GM18951 (cell line): ENCODE measurements at regions of chrX and their contacts with region 1.

Region 1: DNA sequence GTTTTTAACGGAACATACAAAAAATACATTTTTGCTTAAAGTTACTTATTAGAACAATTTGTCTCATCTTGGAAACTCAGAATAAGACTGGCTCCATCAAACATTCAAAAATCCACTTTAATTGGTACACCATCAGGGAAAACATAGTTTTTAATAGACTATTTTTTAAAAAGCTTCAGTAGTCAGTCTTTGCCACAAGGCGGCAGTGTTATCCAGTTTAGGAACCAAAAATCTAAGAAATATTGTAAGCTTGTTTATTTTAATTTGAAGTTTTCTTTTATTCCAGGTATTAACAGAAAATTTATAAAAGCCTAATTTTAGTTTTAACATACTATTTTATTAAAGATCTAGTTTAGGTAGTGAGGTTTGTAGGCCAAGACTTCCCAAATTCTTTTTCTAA is 107.7 kb downstream of the APOOL start:
- POLR2A ChIP-seq: no peak

Region 2: DNA sequence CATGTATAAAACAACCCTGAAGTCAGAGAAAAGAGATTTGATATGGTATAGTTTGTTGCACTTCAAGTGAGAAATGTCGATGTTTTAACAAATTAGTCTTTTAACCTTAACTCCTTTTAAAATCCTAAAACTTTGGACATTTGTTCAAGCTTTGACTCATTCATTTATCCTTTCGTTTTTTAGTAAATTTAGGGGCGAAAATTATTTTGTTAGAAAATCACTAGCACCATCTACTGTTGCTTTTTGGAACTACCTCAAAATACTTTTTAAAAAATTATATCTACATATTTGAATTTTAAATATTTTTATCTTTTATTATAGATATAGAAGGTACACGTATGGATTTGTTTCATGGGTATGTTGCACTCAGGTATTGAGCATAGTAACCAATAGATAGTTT is 433.3 kb after region 1 on chrX:
- in situ Hi-C with region 1: loop called (anchors 25 kb)
- POLR2A ChIP-seq: no peak